Lower leg skin (tissue), 4 donors: ENCODE measurements at regions of chr12 and their contacts with region 1.

Region 1: DNA sequence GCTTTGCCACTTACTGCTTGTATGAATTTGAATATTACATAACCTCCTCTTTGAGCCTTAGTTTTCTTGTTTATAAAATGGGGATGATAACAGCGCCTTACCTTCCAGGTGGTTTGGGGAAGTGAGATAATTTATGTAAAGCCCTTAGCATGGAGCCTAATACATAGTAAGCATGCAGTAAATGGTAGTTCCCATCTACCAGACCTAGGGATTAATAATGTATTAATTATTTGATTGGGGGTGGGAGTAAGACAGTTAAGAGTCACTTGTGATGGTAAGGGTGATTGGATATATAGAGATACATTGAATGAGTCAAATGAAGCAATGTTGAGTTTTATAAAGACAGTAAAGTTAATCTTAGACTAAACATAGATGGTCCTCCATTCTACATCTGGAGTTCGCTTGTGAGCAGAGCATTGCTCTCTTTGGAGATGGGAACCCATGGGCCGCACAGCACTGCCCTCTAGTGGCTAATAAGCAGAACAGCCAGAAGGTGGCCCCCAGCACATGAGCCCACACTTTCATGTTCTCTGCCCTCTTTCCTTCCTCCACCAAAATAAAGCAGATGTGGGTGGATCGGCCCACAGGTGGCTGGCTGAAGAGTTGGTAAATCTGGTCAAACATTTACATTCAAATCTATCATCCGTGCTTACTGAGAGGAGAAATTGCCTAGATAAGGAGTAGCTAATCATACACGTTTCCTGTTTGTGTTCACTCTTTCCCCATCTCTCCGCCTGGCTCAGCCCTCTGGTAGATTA is 26.5 kb upstream of the TAMALIN start:
- DNase-seq: peak; percentile 68 to 94
- H3K4me3 ChIP-seq: no peak overlapping the region
- CTCF ChIP-seq: peak in 1 of 3 donors; percentile 90
- POLR2A ChIP-seq: no peak

Region 2: DNA sequence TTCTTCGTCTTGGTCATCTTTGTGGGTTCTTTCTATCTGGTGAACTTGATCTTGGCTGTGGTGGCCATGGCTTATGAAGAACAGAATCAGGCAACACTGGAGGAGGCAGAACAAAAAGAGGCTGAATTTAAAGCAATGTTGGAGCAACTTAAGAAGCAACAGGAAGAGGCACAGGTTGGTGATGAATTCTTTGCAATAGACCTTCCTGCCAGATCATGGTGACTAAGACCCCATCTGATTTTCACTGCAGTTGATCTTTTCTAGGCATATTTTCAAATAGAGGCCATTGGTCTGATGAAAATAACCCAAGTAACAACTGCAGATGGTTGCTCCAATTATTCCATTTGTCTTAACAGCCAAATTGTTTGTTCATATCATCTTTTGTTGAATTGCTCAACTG is 274.8 kb before region 1 on chr12:
- intact Hi-C with region 1: no loop called
- DNase-seq: no peak
- H3K4me3 ChIP-seq: no peak overlapping the region
- CTCF ChIP-seq: no peak
- POLR2A ChIP-seq: no peak

Region 3: GRCh38 chr12:51923501-51924271 is 56.5 kb before region 1 on chr12:
- intact Hi-C with region 1: loop called (anchors 5 kb)
- DNase-seq: peak; percentile 49 to 94
- H3K4me3 ChIP-seq: no peak overlapping the region
- CTCF ChIP-seq: peak in 2 of 3 donors; percentile 7 to 49
- POLR2A ChIP-seq: no peak

Region 4: DNA sequence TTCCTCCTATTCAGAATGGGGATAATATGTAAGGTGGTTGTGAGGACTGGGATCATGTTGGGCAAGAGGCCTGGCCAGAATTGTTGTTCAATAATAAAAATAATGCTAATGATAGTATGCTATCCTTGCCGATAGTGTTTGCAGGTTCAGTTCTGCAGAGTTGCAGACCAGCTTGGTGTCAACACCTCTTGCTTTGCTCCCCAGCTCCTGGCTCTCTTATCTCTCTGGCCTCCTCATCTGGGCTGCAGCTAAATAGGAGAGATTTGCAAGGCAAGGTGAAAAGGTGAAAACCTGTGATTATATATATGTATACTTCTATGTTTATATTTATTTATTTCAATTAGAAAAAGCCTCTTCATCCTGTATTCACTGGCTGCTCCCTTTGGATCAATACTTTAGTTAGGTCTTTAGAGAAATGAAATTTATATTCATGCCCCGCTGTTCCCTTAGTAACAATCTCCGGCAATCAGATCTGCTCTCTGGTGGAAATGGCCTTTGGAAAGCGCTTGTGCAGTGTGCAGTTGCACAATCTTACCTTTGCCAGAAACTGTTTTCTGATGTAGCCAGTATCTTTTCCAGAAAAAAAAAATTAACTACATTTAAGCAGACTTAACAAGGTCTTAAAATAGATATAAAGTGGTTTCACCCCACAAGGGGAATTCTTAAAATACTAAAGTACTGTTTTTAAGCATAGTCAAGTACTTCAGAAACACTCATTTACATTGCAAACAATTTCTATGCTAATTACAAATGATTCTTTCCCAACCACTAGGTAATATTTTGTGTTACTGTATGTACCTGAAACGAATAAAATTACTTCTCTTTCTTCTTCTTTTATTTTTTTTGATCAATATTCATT is 47.8 kb before region 1 on chr12:
- intact Hi-C with region 1: loop called (anchors 5 kb)
- DNase-seq: peak in 1 of 2 donors; percentile 7
- H3K4me3 ChIP-seq: no peak overlapping the region
- CTCF ChIP-seq: no peak
- POLR2A ChIP-seq: no peak